Activated CD4-positive, alpha-beta T cell treated with anti-CD3 and anti-CD28 coated beads for 36 hours (primary cell): ENCODE measurements at regions of chr12 and their contacts with region 1.

Region 1: DNA sequence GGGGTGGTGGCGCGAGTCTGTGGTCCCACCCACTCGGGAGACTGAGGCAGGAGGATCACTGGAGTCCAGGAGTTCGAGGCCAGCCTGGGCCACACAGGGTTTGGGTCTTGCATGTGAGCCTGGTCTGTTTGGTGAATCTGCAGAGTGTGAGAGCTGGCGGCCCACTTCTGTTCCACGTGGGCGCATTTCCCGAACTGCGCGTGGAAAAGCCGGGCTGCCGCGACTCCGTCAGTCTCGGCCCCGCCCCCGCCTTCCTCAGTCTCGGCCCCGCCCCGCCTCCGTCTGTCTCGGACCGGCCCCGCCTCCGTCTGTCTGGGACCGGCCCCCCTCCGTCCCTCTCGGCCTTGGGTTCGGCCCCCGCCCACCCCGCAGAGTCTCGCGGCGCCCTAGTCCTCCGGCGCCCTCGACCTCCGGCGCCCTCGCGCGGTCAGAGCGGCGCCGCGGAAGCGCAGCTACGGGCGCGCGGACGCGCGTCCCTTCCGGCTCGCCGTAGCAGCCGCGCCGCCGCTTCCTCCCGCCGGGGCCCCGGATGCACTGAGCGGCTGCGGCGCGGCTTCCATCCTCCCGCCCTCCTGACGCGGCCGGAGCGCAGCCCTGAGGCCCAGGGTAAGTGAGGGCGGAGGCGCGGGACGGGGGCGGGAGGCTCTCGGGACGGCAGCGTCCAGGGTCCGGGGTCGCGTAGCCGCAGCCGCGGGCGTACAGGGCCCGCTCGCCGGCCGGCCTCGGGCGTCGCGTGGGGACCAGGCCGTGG is at the start of gene EP400:
- DNase-seq: peak; percentile 97
- ATAC-seq: peak; percentile 96
- H3K4me3 Mint-ChIP-seq: peak within 1 kb of the TSS; percentile 88
- H3K27ac Mint-ChIP-seq: peak within 1 kb of the TSS; percentile 93
- H3K4me1 Mint-ChIP-seq: peaks cover 42% of the 10 kb centered on the region
- H3K27me3 Mint-ChIP-seq: no peaks in the 10 kb centered on the region
- total RNA-seq, gene EP400: 46.4 to 51.3 TPM

Region 2: GRCh38 chr12:131710464-131711457 is 238.8 kb before region 1 on chr12 and contains the start of gene SFSWAP:
- CTCF ChIA-PET with region 1: no interaction called
- POLR2A ChIA-PET with region 1: no interaction called
- intact Hi-C with region 1: loop called in 1 of 2 experiments (anchors 5 kb)
- DNase-seq: peak; percentile 85
- ATAC-seq: peak; percentile 92
- H3K4me3 Mint-ChIP-seq: peak within 1 kb of the TSS; percentile 98
- H3K27ac Mint-ChIP-seq: peak within 1 kb of the TSS; percentile 97
- H3K4me1 Mint-ChIP-seq: peaks cover 24% of the 10 kb centered on the region
- H3K27me3 Mint-ChIP-seq: no peaks in the 10 kb centered on the region
- total RNA-seq, gene SFSWAP: 47.9 to 73.1 TPM

Region 3: GRCh38 chr12:131830335-131830913 is 119.2 kb before region 1 on chr12:
- CTCF ChIA-PET with region 1: interaction called, 3 read pairs
- POLR2A ChIA-PET with region 1: no interaction called
- intact Hi-C with region 1: loop called in 1 of 2 experiments (anchors 1 kb)
- DNase-seq: peak; percentile 69
- ATAC-seq: peak; percentile 63
- H3K4me3 Mint-ChIP-seq: peak overlapping the region; percentile 12
- H3K27ac Mint-ChIP-seq: no peak overlapping the region
- H3K4me1 Mint-ChIP-seq: peaks cover 11% of the 10 kb centered on the region
- H3K27me3 Mint-ChIP-seq: peaks cover 39% of the 10 kb centered on the region

Region 4: GRCh38 chr12:131894313-131894860 is 55.2 kb before region 1 on chr12 and contains the start of gene ULK1:
- CTCF ChIA-PET with region 1: no interaction called
- POLR2A ChIA-PET with region 1: no interaction called
- intact Hi-C with region 1: loop called (anchors 1 kb)
- DNase-seq: peak; percentile 96
- ATAC-seq: peak; percentile 86
- H3K4me3 Mint-ChIP-seq: peak within 1 kb of the TSS; percentile 78
- H3K27ac Mint-ChIP-seq: peak within 1 kb of the TSS; percentile 55
- H3K4me1 Mint-ChIP-seq: peaks cover 12% of the 10 kb centered on the region
- H3K27me3 Mint-ChIP-seq: no peaks in the 10 kb centered on the region
- total RNA-seq, gene ULK1: 12.9 to 14.4 TPM

Region 5: GRCh38 chr12:131928711-131929580 is 20.7 kb before region 1 on chr12 and contains the start of gene PUS1:
- CTCF ChIA-PET with region 1: no interaction called
- POLR2A ChIA-PET with region 1: no interaction called
- intact Hi-C with region 1: loop called (anchors 1 kb)
- DNase-seq: peak; percentile 97
- ATAC-seq: peak; percentile 89
- H3K4me3 Mint-ChIP-seq: peak within 1 kb of the TSS; percentile 97
- H3K27ac Mint-ChIP-seq: peak within 1 kb of the TSS; percentile 85
- H3K4me1 Mint-ChIP-seq: peaks cover 25% of the 10 kb centered on the region
- H3K27me3 Mint-ChIP-seq: no peaks in the 10 kb centered on the region
- total RNA-seq, gene PUS1: 37.8 to 56.5 TPM

Region 6: DNA sequence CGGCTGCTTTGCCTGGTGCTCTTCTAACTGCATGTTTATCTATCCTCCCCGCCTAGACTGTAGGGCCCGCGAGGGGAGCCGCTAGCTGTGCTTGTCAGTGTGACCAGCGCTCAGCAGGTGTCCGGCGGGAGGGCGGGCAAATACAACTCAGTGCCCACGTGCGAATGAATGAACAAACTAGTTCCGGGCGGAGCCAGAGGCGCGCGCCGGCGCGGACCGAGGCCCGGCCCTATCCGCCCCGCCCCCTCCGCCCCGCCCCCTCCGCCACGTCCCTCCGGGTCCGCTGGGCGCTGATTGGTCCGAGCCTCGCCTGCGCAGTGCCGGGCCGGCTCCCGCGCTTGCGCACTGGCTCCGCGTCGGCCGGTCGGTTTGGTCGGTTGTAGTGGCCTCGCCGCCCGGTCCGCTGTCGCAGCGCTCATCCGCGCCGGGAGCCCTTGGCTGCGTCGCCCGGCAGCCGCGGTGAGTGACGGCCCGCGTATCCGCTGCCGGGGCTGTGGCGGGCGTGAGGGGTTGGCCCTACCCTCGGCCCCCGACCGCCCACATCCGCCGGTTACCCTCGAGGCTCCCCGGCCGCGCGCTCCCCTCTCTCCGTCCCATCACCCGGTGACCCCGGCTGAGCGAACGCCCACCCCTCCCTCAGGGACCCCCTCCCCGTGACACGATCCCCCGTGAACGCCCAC is 134.5 kb after region 1 on chr12:
- CTCF ChIA-PET with region 1: no interaction called
- POLR2A ChIA-PET with region 1: no interaction called
- intact Hi-C with region 1: loop called in 1 of 2 experiments (anchors 1 kb)
- DNase-seq: peak; percentile 94
- ATAC-seq: peak; percentile 95
- H3K4me3 Mint-ChIP-seq: peak overlapping the region; percentile 86
- H3K27ac Mint-ChIP-seq: peak overlapping the region; percentile 91
- H3K4me1 Mint-ChIP-seq: peaks cover 23% of the 10 kb centered on the region
- H3K27me3 Mint-ChIP-seq: no peaks in the 10 kb centered on the region

Region 7: DNA sequence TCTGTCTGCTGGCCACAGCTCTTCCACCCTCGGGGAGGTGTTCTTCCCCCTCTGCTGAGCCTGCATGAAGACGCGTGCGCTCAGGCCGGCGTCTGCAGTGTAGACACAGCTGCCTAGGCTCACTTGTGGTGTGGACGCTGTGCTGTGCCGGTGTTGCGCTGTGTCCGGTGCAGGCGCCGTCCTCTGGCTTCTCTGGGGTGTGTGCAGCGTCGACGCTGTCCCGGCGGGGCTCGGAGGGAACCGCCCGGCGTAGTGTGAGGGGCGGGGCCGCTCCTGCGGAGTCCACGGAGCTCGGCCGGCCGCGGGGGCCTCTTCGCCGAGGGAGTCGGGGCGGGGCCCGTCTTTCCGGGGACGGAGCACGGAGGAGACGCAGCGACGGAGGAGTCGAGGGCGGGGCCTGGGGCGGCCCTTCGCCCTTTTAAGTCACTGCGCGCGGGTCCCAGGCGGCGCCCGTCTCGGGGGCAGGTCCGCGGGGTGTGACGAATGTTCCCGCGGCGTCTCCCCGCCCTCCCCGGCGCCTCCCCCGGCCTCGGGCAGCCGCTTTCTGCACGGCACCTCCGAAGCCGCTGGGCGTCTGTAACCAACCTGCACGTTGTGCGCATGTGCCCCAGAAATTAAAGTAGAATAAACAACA is 239.9 kb after region 1 on chr12:
- CTCF ChIA-PET with region 1: no interaction called
- POLR2A ChIA-PET with region 1: no interaction called
- intact Hi-C with region 1: loop called in 1 of 2 experiments (anchors 1 kb)
- DNase-seq: peak; percentile 97
- ATAC-seq: peak; percentile 95
- H3K4me3 Mint-ChIP-seq: peak overlapping the region; percentile 78
- H3K27ac Mint-ChIP-seq: peak overlapping the region; percentile 79
- H3K4me1 Mint-ChIP-seq: peaks cover 28% of the 10 kb centered on the region
- H3K27me3 Mint-ChIP-seq: no peaks in the 10 kb centered on the region